Ovary (tissue), 10 donors: ENCODE measurements at regions of chr4 and their contacts with region 1.

Region 1: GRCh38 chr4:182938205-182938645 is 21.0 kb upstream of the DCTD start:
- DNase-seq: peak; percentile 30 to 70 (median 58)
- H3K4me3 ChIP-seq: no peak overlapping the region
- H3K27ac ChIP-seq: no peak overlapping the region
- H3K4me1 ChIP-seq: no peaks in the 10 kb centered on the region
- H3K27me3 ChIP-seq: no peaks in the 10 kb centered on the region
- CTCF ChIP-seq: peak; percentile 46 to 57 (median 49)
- EP300 ChIP-seq: no peak
- POLR2A ChIP-seq: no peak

Region 2: DNA sequence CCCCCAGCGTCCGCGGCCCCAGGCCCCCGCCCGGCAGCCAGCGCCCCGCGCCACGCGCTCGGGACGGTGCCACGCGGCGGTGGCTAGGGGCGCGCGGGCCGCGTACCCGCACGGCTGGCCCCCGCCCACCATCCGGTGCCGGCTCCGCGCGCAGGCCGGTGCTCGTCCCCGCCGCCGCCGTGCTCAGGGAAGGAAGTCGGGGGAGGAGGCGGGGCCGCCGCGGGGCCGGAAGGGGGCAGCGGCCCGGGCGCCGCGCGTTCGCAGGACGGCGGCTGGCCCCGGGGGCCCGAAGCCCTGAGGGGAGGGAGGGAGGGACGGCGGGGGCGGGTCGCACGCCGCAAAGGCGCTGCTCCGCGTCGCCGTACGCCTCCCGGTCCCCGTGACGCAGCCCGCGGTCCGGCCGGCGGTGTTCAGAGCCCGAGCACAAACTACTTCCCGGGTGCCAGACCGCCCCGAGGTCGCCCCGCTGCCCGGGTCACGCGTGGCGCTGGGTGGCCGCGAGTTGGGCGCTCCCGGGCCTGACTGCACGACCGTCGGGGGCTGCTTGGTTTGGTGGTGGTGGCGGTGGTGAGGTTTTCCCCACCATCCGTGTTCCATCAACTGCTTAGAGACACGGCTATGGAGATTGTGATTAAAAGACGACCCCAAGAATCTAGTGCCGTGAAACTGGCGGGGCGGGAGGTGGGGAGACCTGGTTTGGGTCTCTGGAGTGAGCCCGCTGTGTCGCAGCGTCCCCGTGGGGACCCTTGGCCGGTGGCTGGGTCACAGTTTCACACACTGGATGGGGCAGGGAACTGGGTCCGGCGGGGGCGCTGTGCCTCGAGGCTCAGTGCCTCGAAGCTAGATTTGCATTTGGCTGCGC is 20.8 kb before region 1 on chr4 and contains the start of gene DCTD:
- intact Hi-C with region 1: no loop called
- DNase-seq: peak; percentile 76 to 87 (median 82)
- H3K4me3 ChIP-seq: peak within 1 kb of the TSS; percentile 84
- H3K27ac ChIP-seq: peak within 1 kb of the TSS; percentile 76 to 98
- H3K4me1 ChIP-seq: peaks cover 4% of the 10 kb centered on the region
- H3K27me3 ChIP-seq: no peaks in the 10 kb centered on the region
- CTCF ChIP-seq: peak in 1 of 3 donors; percentile 11
- EP300 ChIP-seq: no peak
- POLR2A ChIP-seq: peak; percentile 28
- total RNA-seq, gene DCTD: 34.1 to 99.3 (median 91.6) TPM

Region 3: GRCh38 chr4:182994171-182994570 is 55.9 kb after region 1 on chr4:
- intact Hi-C with region 1: no loop called
- DNase-seq: no peak
- H3K4me3 ChIP-seq: no peak overlapping the region
- H3K27ac ChIP-seq: no peak overlapping the region
- H3K4me1 ChIP-seq: no peaks in the 10 kb centered on the region
- H3K27me3 ChIP-seq: no peaks in the 10 kb centered on the region
- CTCF ChIP-seq: no peak
- EP300 ChIP-seq: no peak
- POLR2A ChIP-seq: no peak

Region 4: DNA sequence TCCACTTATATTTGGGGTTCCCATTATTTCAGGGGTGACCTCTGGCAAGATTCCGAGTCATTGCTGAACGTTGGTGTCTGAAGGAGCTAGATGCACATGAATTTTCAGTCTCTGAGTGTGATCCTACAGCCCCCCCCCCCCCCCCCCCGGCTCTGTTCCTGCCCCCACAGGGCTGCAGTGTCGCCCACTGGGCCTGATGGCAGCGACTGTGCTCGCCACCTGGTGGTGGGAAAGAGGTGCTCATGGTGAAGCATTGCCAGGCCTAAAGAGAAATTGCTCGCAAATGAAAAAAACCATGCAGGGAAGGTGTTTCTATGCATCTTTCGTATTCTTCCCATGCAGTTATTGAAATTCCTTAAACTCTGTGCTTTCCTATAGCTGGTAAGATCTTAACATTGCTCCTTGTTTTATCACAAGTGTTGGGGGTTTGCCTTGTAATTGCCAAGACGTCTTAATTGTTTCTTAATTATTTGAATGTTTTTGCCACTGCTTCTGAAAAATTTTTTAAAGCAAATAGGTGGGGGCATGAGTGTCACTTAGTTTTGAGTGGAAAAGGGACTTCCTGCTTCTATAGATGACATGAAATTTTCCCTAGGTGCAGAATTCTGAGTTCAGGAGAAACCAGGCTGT is 318.6 kb after region 1 on chr4:
- intact Hi-C with region 1: loop called (anchors 5 to 10 kb)
- DNase-seq: peak; percentile 54 to 74 (median 66)
- H3K4me3 ChIP-seq: no peak overlapping the region
- H3K27ac ChIP-seq: no peak overlapping the region
- H3K4me1 ChIP-seq: peaks cover 2% of the 10 kb centered on the region
- H3K27me3 ChIP-seq: no peaks in the 10 kb centered on the region
- CTCF ChIP-seq: peak; percentile 49 to 77 (median 52)
- EP300 ChIP-seq: no peak
- POLR2A ChIP-seq: no peak

Region 5: DNA sequence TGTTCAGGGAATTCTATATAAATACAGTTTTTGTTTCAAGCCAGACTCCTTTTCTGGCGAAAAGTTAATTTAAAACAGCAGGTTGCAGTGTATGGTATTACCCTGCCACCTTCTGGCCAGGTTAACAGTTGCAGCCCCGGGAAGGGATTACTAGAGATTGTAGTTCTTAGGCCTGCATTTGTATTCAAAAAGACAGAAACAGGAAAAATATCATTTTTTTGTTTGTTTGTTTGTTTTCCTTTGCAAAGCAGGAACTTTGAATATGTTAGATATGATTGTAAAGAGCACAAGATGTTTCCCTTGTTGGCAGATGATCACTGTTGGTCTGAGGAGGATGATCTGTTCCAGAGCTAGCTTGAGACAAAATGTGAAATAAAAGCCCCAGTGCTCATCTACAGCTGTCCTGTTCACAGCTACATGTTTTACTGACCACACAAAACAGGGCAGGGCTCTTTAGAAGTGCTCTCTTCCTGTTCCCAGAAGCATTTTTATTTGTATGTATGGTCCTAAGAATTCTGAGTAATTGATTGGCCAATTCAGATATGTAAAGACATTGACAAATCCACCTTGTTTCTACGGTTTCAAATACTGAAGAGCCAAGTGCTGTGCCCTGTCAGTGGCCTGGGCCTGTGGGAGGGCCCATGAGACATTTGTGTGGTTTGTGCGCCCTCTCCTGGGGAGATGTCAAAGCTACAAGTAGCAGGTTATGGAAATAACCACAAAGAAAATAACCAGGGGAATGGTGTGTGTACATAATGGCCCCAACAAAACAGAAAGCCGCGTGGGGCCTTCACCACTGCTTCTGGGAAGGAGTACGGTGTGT is 323.9 kb after region 1 on chr4:
- intact Hi-C with region 1: loop called (anchors 5 to 10 kb)
- DNase-seq: peak; percentile 71 to 84 (median 83)
- H3K4me3 ChIP-seq: no peak overlapping the region
- H3K27ac ChIP-seq: no peak overlapping the region
- H3K4me1 ChIP-seq: no peaks in the 10 kb centered on the region
- H3K27me3 ChIP-seq: no peaks in the 10 kb centered on the region
- CTCF ChIP-seq: peak; percentile 50 to 76 (median 60)
- EP300 ChIP-seq: no peak
- POLR2A ChIP-seq: no peak

Region 6: GRCh38 chr4:183722731-183723560 is 784.7 kb after region 1 on chr4:
- intact Hi-C with region 1: no loop called
- DNase-seq: peak; percentile 51 to 74 (median 56)
- H3K4me3 ChIP-seq: peak overlapping the region; percentile 42
- H3K27ac ChIP-seq: peak overlapping the region; percentile 2 to 26
- H3K4me1 ChIP-seq: peaks cover 3% of the 10 kb centered on the region
- H3K27me3 ChIP-seq: no peaks in the 10 kb centered on the region
- CTCF ChIP-seq: no peak
- EP300 ChIP-seq: no peak
- POLR2A ChIP-seq: no peak

Region 7: DNA sequence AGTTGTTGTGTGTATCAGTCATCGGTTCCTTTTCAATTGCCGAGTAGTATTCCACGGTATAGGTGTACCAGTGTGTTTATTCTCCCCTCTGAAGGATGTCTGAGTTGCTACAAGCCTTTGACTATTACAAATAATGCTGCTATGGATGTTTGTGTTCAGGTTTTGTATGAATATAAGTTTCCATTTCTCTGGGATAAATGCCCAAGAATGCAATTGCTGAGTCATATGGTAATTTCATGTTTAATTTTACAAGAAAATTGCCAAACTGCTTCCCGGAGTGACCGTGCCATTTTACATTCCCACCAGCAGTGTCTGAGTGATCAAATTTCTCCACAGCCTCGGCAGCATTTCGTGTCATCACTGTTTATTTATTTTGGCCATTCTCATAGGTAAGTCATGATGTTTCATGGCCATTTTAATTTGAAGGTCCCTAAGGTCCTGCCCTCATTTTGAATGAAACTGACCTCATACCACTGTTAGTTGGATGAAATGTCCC is 1462.2 kb after region 1 on chr4:
- intact Hi-C with region 1: no loop called
- DNase-seq: peak in 1 of 5 donors; percentile 45
- H3K4me3 ChIP-seq: no peak overlapping the region
- H3K27ac ChIP-seq: peak overlapping the region in 1 of 2 donors; percentile 68
- H3K4me1 ChIP-seq: peaks cover 34% of the 10 kb centered on the region
- H3K27me3 ChIP-seq: no peaks in the 10 kb centered on the region
- CTCF ChIP-seq: no peak
- EP300 ChIP-seq: no peak
- POLR2A ChIP-seq: no peak